ENCODE measurements at regions of chr19 and their contacts with region 1.

Region 1: GRCh38 chr19:8513687-8514504 is at the start of gene ZNF414:
- DNase-seq: peak; percentile 97
- ATAC-seq: peak; percentile 85
- H3K4me3 Mint-ChIP-seq: peak within 1 kb of the TSS; percentile 80
- H3K27ac Mint-ChIP-seq: peak within 1 kb of the TSS; percentile 98
- H3K4me1 Mint-ChIP-seq: peaks cover 58% of the 10 kb centered on the region
- H3K27me3 Mint-ChIP-seq: no peaks in the 10 kb centered on the region
- total RNA-seq, gene ZNF414: 23.8 to 38.5 TPM

Region 2: DNA sequence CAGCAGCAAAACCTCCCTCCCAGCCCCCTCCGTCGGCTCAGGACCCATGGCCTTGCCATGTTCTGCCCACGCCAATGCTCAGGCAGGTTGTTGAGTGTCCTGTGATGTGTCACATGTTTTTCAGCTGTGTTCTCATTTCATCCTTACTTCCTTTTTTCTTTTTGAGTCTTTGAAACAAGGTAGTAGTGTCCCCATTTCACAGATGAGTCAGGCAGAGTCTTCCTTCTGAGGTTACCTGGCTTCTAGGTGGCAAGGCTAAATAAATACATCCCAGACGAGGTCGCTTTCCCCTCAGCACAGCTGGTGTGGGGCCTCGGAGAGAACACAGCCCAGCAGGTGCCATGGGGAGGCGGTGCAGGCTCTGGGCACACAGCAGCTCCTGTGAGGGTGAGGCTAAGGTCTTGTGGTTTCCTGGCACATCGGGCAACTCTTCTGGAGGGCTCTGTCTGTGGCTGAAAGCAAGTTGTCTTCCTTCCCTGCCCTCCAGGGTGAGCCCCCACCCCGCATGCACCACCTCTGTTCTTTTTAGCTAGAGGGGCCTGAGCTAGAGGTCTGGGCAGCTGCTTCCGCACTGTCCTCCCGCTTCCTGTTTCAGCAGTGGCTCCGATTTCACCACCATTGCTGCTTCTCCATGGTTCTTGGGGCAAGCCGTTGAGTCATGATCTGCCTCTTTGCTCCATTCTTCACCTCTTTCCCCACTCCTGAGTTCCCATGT is 26.6 kb before region 1 on chr19:
- CTCF ChIA-PET with region 1: interaction called, 13 read pairs
- DNase-seq: peak; percentile 78
- ATAC-seq: peak; percentile 78
- H3K4me3 Mint-ChIP-seq: no peak overlapping the region
- H3K27ac Mint-ChIP-seq: peak overlapping the region; percentile 82
- H3K4me1 Mint-ChIP-seq: peaks cover 39% of the 10 kb centered on the region
- H3K27me3 Mint-ChIP-seq: no peaks in the 10 kb centered on the region

Region 3: DNA sequence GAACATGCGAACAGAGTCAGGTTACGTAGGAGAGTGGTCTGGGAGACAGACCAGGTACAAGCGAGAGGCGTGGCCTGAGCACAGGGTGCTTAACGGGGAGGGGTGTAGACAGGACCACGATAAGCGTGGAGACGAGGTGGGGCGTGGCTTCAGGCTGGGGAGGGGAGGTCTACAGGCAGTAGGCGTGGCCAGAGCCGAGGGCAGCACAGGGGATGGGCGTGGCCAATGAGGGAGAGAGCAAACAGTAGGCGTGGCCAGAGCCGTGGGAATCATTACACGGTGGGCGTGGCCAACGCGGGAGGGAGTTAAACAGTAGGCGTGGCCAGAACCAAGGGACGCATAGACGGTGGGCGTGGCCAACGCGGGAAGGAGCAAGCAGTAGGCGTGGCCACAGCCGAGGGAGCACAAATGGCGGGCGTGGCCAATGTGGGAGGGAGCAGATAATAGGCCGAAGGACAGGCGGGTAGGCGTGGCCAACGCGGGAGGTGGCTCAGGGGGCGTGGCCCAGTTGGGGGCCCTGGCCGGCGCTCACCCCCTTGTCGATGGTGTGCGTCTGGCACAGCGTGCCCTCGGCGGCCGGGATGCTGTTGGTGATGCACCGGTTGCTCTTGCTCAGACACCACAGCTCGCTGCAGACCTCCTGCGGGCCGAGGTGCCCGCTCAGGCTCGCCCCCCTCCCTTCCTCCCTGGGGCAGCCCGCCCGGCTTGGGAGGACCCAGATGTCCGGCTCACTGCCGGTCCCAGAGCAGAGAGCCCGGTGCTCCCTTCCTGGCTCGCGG is 78.5 kb after region 1 on chr19:
- CTCF ChIA-PET with region 1: no interaction called
- DNase-seq: peak; percentile 90
- ATAC-seq: peak; percentile 91
- H3K4me3 Mint-ChIP-seq: peak overlapping the region; percentile 63
- H3K27ac Mint-ChIP-seq: no peak overlapping the region
- H3K4me1 Mint-ChIP-seq: peaks cover 11% of the 10 kb centered on the region
- H3K27me3 Mint-ChIP-seq: peaks cover 6% of the 10 kb centered on the region

Measured in activated CD8-positive, alpha-beta memory T cell treated with anti-CD3 and anti-CD28 coated beads, Interleukin-2, amount 10 ng/mL, durations not matched to agents 7 days and 5 days (primary cell).